ENCODE measurements at regions of chr10 and their contacts with region 1.

Region 1: DNA sequence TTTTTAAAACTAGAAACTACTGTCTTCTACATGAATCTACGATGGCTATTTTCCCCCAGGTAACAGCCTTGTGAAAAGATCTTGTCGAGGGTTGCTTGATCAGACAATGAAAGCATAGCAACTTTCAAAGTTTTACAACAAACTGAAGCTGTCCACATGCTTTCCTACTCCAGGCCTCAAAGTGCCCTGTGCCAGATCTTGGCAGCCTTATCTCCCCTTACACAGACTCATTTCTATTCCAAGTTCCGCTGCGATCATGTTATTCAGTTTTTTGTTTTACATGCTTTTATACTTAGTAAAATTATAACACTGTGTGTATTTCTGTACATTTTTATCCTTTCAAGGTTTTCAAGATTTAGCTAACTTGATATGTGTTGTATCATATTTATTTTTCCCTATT is 661.7 kb upstream of the SORCS1 start:
- DNase-seq: no peak
- H3K4me3 ChIP-seq: no peak overlapping the region
- H3K27ac ChIP-seq: no peak overlapping the region
- H3K4me1 ChIP-seq: no peaks in the 10 kb centered on the region
- H3K27me3 ChIP-seq: no peaks in the 10 kb centered on the region
- CTCF ChIP-seq: no peak
- POLR2A ChIP-seq: no peak

Region 2: DNA sequence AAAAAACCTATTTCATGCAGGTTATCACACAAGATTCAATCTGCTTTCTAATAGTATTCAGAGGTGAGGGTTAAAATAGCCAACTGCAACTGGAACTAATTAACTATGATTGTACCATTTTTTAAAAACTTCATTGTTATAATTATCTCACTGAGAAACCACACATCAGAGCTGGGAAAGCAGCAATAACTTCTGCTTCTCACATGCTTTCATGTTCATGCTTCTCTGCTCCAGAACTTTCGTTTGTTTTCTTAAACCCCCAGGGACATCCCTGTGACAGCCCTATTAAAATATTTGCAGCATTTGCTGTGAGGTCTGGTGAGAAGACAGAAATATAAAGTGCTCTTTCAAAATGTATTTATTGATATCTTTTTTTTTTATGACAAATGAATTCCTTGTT is 272.7 kb before region 1 on chr10:
- intact Hi-C with region 1: no loop called
- DNase-seq: no peak
- H3K4me3 ChIP-seq: no peak overlapping the region
- H3K27ac ChIP-seq: no peak overlapping the region
- H3K4me1 ChIP-seq: no peaks in the 10 kb centered on the region
- H3K27me3 ChIP-seq: no peaks in the 10 kb centered on the region
- CTCF ChIP-seq: no peak
- POLR2A ChIP-seq: no peak

Region 3: GRCh38 chr10:107865691-107866090 is 39.5 kb after region 1 on chr10:
- intact Hi-C with region 1: loop called (anchors 2 kb)
- DNase-seq: no peak
- H3K4me3 ChIP-seq: no peak overlapping the region
- H3K27ac ChIP-seq: no peak overlapping the region
- H3K4me1 ChIP-seq: no peaks in the 10 kb centered on the region
- H3K27me3 ChIP-seq: no peaks in the 10 kb centered on the region
- CTCF ChIP-seq: no peak
- POLR2A ChIP-seq: no peak

Measured in breast epithelium (tissue), 4 donors.